Cardiac septum (tissue), 1 donor: ENCODE measurements at regions of chr16 and their contacts with region 1.

Region 1: GRCh38 chr16:89922884-89923690 is at the start of gene TUBB3:
- DNase-seq: peak; percentile 89
- total RNA-seq, gene TUBB3: 6.8 TPM

Region 2: GRCh38 chr16:89720813-89721545 is 202.1 kb before region 1 on chr16 and contains the starts of genes VPS9D1 and ZNF276:
- intact Hi-C with region 1: loop called (anchors 5 kb)
- DNase-seq: peak; percentile 93
- total RNA-seq, gene VPS9D1: 19.7 TPM
- total RNA-seq, gene ZNF276: 17.5 TPM

Region 3: DNA sequence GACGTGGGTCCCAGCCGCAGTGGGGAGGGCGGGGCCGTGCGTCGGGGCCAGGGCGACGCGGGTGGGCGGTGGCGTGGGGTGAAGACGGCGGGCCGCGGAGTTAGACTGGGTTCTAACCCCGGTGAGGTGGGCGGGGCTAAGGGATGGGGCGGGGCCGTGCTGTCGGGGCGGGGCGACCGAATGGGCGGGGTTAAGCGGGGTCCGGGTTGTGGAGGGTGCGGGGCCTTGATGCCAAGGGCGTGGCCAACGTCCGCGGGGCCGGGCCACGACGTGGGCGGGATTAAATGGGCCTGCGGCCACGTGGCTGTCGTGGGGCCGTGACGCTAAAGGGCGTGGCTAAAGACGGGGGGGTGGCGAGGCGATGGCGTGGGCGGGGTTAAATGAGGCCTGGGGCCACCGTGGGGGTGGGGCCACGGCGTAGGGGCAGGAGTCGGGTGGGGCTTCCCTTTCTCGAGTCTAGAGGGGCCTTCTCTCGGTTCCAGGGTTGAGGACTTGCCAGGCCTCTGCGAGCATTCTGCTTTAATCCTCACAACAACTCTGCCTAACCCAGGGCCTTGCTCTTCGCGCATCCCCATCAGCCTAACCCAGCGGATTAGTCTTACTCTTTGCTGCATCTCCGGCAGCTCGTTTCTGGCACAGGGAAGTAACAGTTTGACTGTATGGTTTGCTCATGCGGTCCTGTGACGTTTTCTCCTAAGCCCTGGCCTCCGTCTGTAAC is 49.0 kb before region 1 on chr16:
- intact Hi-C with region 1: loop called (anchors 5 kb)
- DNase-seq: peak; percentile 99

Region 4: GRCh38 chr16:89972244-89973234 is 49.5 kb after region 1 on chr16:
- intact Hi-C with region 1: loop called (anchors 5 kb)
- DNase-seq: peak; percentile 96